ENCODE measurements at regions of chr10 and their contacts with region 1.

Region 1: GRCh38 chr10:43204943-43205671 is 61.8 kb downstream of the RASGEF1A start:
- DNase-seq: peak; percentile 79
- ATAC-seq: peak; percentile 73
- H3K4me3 Mint-ChIP-seq: no peak overlapping the region
- H3K27ac Mint-ChIP-seq: no peak overlapping the region
- H3K4me1 Mint-ChIP-seq: peaks cover 2% of the 10 kb centered on the region
- H3K27me3 Mint-ChIP-seq: no peaks in the 10 kb centered on the region
- CTCF ChIP-seq: peak; percentile 88

Region 2: GRCh38 chr10:43120929-43121314 is 84.2 kb before region 1 on chr10:
- CTCF ChIA-PET with region 1: interaction called, 26 read pairs
- POLR2A ChIA-PET with region 1: no interaction called
- intact Hi-C with region 1: no loop called
- DNase-seq: peak; percentile 88
- ATAC-seq: peak; percentile 99
- H3K4me3 Mint-ChIP-seq: peak overlapping the region; percentile 13
- H3K27ac Mint-ChIP-seq: peak overlapping the region; percentile 89
- H3K4me1 Mint-ChIP-seq: peaks cover 24% of the 10 kb centered on the region
- H3K27me3 Mint-ChIP-seq: no peaks in the 10 kb centered on the region
- CTCF ChIP-seq: no peak

Region 3: DNA sequence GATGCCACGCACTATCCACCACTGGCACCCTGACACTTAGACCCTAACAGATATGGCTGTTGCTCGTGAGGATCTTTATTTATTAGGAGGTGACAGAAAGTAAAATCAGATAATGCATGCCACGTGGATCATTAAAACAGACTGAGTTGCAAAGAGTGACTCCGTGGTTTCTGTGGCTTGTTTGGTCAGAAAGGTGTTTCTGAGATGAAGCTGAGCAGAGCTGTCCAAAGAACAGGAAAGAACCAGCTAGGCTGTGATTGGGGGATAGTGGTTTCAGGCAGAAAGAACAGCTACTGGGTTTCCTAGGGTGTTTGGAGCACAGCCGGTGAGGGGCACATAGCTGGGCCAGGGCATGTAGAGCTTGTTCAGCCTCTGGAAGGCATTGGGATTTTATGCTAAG is 32.5 kb before region 1 on chr10:
- CTCF ChIA-PET with region 1: interaction called, 10 read pairs
- POLR2A ChIA-PET with region 1: interaction called, 3 read pairs
- intact Hi-C with region 1: no loop called
- DNase-seq: peak; percentile 12
- ATAC-seq: no peak
- H3K4me3 Mint-ChIP-seq: no peak overlapping the region
- H3K27ac Mint-ChIP-seq: peak overlapping the region; percentile 17
- H3K4me1 Mint-ChIP-seq: peaks cover 21% of the 10 kb centered on the region
- H3K27me3 Mint-ChIP-seq: no peaks in the 10 kb centered on the region
- CTCF ChIP-seq: no peak

Region 4: GRCh38 chr10:43218443-43219185 is 13.5 kb after region 1 on chr10:
- CTCF ChIA-PET with region 1: interaction called, 24 read pairs
- POLR2A ChIA-PET with region 1: no interaction called
- intact Hi-C with region 1: no loop called
- DNase-seq: no peak
- ATAC-seq: no peak
- H3K4me3 Mint-ChIP-seq: no peak overlapping the region
- H3K27ac Mint-ChIP-seq: no peak overlapping the region
- H3K4me1 Mint-ChIP-seq: peaks cover 5% of the 10 kb centered on the region
- H3K27me3 Mint-ChIP-seq: no peaks in the 10 kb centered on the region
- CTCF ChIP-seq: no peak

Region 5: DNA sequence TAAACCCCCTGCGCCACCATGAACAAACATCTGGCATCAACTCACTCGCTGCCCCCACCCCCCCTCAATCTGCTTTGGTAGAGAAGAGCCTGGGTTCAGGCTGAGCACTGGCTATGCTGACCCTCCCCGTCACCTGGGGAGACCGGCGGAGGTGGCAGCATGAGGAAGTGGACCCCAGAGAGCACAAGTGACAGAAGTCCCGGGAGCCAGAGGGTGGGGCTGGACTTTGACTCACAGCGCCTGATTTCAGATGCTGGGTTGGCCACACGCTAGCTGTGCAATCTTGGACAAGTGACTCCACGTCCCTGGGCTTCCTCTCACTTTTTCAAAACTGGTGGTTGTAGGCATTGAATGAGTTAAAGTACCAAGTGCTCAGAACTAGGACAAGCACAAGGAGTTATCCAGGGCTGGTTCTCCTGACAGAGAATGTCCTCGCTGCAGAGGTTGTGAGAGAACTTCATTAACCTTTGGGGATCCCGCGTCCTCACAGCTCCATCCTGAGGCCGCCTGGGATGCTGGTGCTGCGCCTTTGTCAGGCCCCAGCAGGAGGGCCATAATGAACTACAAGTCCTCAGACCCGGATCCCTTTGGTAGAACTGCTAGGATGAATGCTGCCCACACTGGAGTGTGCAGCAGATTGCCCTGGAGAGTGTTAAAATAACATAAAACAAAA is 110.6 kb after region 1 on chr10:
- CTCF ChIA-PET with region 1: no interaction called
- POLR2A ChIA-PET with region 1: no interaction called
- intact Hi-C with region 1: no loop called
- DNase-seq: no peak
- ATAC-seq: no peak
- H3K4me3 Mint-ChIP-seq: no peak overlapping the region
- H3K27ac Mint-ChIP-seq: no peak overlapping the region
- H3K4me1 Mint-ChIP-seq: no peaks in the 10 kb centered on the region
- H3K27me3 Mint-ChIP-seq: peaks cover 2% of the 10 kb centered on the region
- CTCF ChIP-seq: no peak

Region 6: GRCh38 chr10:43461950-43462349 is 256.8 kb after region 1 on chr10:
- CTCF ChIA-PET with region 1: interaction called, 4 read pairs
- POLR2A ChIA-PET with region 1: no interaction called
- intact Hi-C with region 1: loop called (anchors 10 kb)
- DNase-seq: peak; percentile 38
- ATAC-seq: peak; percentile 82
- H3K4me3 Mint-ChIP-seq: no peak overlapping the region
- H3K27ac Mint-ChIP-seq: no peak overlapping the region
- H3K4me1 Mint-ChIP-seq: peaks cover 5% of the 10 kb centered on the region
- H3K27me3 Mint-ChIP-seq: no peaks in the 10 kb centered on the region
- CTCF ChIP-seq: peak; percentile 75